Activated CD8-positive, alpha-beta T cell treated with anti-CD3 and anti-CD28 coated beads, Interleukin-2, amount 10 ng/mL, durations not matched to agents 7 days and 5 days (primary cell): ENCODE measurements at regions of chr11 and their contacts with region 1.

Region 1: DNA sequence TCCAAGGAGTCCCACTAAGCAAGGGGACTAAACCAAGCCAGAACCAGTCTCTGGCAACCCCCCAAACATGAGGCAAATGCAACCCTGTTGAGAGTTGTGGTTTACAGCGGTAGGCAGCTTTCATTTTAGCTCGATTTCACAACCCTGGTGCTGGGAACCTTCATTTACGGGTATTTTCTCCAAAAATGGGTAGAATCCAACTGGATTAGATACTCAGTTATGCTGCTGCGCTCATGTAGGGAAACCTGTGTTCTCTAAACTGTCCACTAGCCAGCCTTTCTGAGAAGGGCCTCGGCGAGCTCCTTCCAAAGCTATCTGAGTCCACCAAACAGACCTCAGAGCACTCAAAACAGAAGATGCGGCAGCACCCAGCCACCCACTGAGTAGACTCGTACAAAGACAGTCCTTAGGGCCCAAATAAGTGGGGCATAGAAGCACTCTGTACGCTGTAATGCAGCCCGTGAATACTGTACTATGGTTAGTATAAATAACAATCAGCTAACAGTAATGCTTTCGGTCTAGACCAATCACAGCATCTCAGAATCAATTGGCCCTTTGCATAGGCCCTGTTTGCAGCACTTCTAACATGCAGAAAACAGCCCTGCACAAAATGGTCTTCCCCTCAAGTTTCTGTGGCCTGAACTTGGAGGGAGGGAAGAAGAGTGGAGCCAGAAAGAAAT is 104.7 kb downstream of the ETS1 start:
- DNase-seq: peak; percentile 65
- ATAC-seq: peak; percentile 70
- H3K4me3 Mint-ChIP-seq: peak overlapping the region; percentile 63
- H3K27ac Mint-ChIP-seq: peak overlapping the region; percentile 88
- H3K4me1 Mint-ChIP-seq: peaks cover 94% of the 10 kb centered on the region
- H3K27me3 Mint-ChIP-seq: no peaks in the 10 kb centered on the region

Region 2: GRCh38 chr11:128302425-128303186 is 180.0 kb before region 1 on chr11:
- CTCF ChIA-PET with region 1: interaction called, 5 read pairs
- POLR2A ChIA-PET with region 1: interaction called, 24 read pairs
- DNase-seq: peak; percentile 90
- ATAC-seq: peak; percentile 90
- H3K4me3 Mint-ChIP-seq: peak overlapping the region; percentile 89
- H3K27ac Mint-ChIP-seq: peak overlapping the region; percentile 96
- H3K4me1 Mint-ChIP-seq: peaks cover 79% of the 10 kb centered on the region
- H3K27me3 Mint-ChIP-seq: no peaks in the 10 kb centered on the region

Region 3: DNA sequence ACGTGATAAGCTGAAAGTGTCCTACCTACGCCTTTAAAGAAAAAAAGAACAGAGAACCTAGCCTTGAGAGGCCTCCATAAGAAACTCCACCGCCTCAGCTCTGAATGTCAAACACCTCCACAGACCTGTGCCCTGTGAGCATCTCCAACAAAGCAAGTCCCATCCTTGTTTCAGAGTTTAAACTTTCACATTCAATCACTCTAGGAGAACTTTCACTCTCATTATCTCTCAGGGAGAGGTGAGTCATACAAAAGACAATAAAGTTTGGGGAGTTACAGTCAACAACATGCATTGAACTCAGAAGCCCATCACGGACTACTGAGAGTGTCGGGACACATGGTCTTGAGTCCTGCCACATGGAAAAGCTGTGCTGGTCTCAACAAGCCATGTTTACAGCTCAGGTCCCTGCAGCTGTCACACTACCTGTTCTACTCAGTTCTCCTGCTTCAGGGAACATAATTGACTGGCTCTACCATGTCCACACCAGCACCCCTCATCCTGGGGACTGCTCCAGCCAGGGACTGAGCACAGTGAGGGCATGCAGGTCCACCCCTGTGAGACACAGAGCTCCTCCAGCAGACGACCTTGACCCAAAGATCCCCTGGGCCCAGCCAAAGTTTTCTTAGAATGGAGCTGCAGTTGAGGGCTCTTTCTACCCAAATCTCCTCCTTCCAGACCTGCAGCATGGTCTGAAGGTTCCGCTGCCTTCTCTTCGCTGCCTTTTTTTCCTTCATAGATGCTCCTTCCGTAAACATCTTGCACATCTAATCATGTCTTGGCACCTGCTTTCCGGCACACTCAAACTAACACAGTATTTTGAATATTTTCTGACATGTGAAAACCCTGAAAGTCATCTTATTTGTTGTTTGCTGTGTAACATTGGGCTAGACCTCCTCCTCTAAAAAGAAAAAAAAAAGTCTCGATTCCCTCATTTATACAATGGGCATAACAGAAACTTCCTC is 10.2 kb before region 1 on chr11:
- CTCF ChIA-PET with region 1: interaction called, 10 read pairs
- POLR2A ChIA-PET with region 1: interaction called, 175 read pairs
- DNase-seq: peak; percentile 69
- ATAC-seq: peak; percentile 55
- H3K4me3 Mint-ChIP-seq: peak overlapping the region; percentile 56
- H3K27ac Mint-ChIP-seq: peak overlapping the region; percentile 85
- H3K4me1 Mint-ChIP-seq: peaks cover 98% of the 10 kb centered on the region
- H3K27me3 Mint-ChIP-seq: no peaks in the 10 kb centered on the region

Region 4: GRCh38 chr11:128497061-128497775 is 14.6 kb after region 1 on chr11:
- CTCF ChIA-PET with region 1: interaction called, 32 read pairs
- POLR2A ChIA-PET with region 1: interaction called, 175 read pairs
- DNase-seq: no peak
- ATAC-seq: no peak
- H3K4me3 Mint-ChIP-seq: peak overlapping the region; percentile 73
- H3K27ac Mint-ChIP-seq: peak overlapping the region; percentile 81
- H3K4me1 Mint-ChIP-seq: peaks cover 95% of the 10 kb centered on the region
- H3K27me3 Mint-ChIP-seq: no peaks in the 10 kb centered on the region

Region 5: DNA sequence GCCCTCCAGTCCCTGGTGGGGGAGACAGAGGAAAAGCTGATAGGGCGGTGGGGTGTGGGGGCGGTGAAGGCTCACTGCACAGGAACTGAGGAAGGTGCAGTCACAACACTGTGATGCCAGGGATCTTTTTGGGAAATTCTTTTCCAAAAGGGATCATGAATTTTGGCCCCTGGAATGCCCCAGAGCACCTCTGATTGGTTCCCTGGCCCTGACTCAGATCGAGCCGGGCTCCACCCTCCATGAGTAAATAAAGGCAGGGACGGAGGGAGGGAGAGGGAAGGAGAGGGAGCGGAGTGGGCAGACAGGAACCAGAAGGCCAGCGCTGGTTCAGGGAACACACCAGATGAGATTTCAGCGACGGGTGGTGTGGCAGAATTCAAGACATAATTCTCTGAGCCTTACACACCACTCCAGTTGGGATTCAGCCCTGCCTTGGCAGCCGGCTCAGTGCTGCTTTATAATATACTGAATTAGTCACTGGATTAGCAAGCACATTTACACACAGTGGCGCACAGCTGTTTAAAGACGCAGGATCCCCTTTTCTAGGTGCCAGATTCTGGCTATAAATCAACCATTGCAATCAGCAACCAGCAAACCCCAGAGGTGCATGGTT is 24.5 kb after region 1 on chr11:
- CTCF ChIA-PET with region 1: interaction called, 10 read pairs
- POLR2A ChIA-PET with region 1: interaction called, 230 read pairs
- DNase-seq: no peak
- ATAC-seq: peak; percentile 7
- H3K4me3 Mint-ChIP-seq: peak overlapping the region; percentile 78
- H3K27ac Mint-ChIP-seq: peak overlapping the region; percentile 96
- H3K4me1 Mint-ChIP-seq: peaks cover 97% of the 10 kb centered on the region
- H3K27me3 Mint-ChIP-seq: no peaks in the 10 kb centered on the region

Region 6: DNA sequence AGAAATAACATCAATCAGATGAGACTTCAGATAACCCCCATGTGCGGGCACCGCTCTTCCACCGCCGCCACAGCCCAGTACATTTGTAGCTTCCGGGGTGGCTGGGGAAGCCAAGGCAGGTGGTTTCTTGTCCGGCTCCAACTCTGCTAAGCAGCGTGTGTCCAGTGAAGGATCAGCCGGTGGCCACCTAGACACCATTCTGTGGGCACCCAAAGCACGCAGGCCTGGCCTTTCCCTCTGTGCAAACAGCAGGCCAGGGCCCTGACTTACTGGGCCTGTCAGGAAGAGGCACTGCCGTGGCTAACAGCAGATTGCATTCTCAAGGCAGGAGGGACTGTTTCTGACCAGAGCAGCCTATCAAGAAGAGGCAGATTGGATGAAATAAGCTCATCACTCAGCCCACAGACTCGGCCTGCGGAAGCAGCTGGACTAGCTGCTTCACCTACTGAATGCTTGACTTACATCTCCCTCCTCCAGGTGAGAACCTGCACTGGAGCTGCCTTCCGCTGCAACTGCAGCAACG is 29.9 kb after region 1 on chr11:
- CTCF ChIA-PET with region 1: interaction called, 10 read pairs
- POLR2A ChIA-PET with region 1: interaction called, 230 read pairs
- DNase-seq: peak; percentile 68
- ATAC-seq: peak; percentile 45
- H3K4me3 Mint-ChIP-seq: peak overlapping the region; percentile 96
- H3K27ac Mint-ChIP-seq: peak overlapping the region; percentile 82
- H3K4me1 Mint-ChIP-seq: peaks cover 84% of the 10 kb centered on the region
- H3K27me3 Mint-ChIP-seq: no peaks in the 10 kb centered on the region